K562 (cell line): ENCODE measurements at regions of chr1 and their contacts with region 1.

Region 1: DNA sequence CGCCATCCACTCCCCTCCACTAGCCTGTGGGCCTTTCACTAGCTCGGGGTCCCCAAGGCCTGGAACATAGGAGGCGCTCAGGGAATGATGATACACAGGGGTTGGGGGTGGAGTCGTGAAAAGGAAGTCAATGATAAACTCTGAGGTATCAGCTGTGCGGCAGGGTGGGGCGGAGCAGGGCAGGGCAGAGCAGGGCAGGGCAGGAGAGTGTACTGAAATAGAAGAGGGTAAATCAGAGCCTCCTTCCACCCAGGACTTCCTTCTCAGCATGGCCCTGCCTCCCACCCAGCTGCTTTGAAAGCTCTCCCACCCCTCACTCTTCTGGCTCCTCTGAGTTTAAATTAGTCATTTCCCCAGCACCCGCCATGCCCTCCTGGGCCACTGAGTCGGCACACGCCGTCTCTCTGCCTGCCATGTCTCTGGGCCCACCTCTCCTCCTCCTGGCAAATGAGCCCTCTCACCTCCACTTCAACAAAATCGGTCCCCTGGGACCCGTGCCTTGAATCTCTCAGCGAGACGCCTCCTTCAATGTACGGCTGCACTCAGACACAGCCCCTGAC is 16.9 kb downstream of the CAPZB start:
- DNase-seq: peak; percentile 70 to 87 (median 76)
- ATAC-seq: peak; percentile 90
- H3K4me3 ChIP-seq: no peak overlapping the region; the same call in 1 of the 2 replicates
- H3K27ac ChIP-seq: peak overlapping the region; percentile 75
- H3K4me1 ChIP-seq: peaks cover 17 to 45% of the 10 kb centered on the region in 2 experiments
- H3K27me3 ChIP-seq: no peaks in the 10 kb centered on the region
- CTCF ChIP-seq: peak in 2 of 3 experiments; percentile 41 to 49; a peak in 4 of 6 replicates
- EP300 ChIP-seq: peak; percentile 10; the same call in 1 of the 2 replicates
- POLR2A ChIP-seq: no peak
- RAD21 ChIP-seq: peak; percentile 42 to 58

Region 2: GRCh38 chr1:19240673-19241538 is 227.6 kb before region 1 on chr1:
- CTCF ChIA-PET with region 1: no interaction called
- POLR2A ChIA-PET with region 1: no interaction called
- in situ Hi-C with region 1: no loop called
- intact Hi-C with region 1: no loop called
- DNase-seq: peak; percentile 74 to 86 (median 76)
- ATAC-seq: peak; percentile 96
- H3K4me3 ChIP-seq: no peak overlapping the region
- H3K27ac ChIP-seq: no peak overlapping the region
- H3K4me1 ChIP-seq: no peaks in the 10 kb centered on the region; a peak in 1 of 5 replicates
- H3K27me3 ChIP-seq: no peaks in the 10 kb centered on the region
- CTCF ChIP-seq: peak; percentile 79 to 96 (median 90)
- EP300 ChIP-seq: no peak
- POLR2A ChIP-seq: no peak
- RAD21 ChIP-seq: peak; percentile 77 to 83

Region 3: GRCh38 chr1:19454265-19455146 is 14.0 kb before region 1 on chr1:
- CTCF ChIA-PET with region 1: no interaction called
- POLR2A ChIA-PET with region 1: interaction called, 22 read pairs
- in situ Hi-C with region 1: no loop called
- intact Hi-C with region 1: no loop called
- DNase-seq: no peak
- ATAC-seq: no peak
- H3K4me3 ChIP-seq: no peak overlapping the region
- H3K27ac ChIP-seq: no peak overlapping the region
- H3K4me1 ChIP-seq: peaks cover 0 to 10% of the 10 kb centered on the region in 2 experiments; a peak in 3 of 5 replicates
- H3K27me3 ChIP-seq: no peaks in the 10 kb centered on the region
- CTCF ChIP-seq: no peak
- EP300 ChIP-seq: no peak
- POLR2A ChIP-seq: no peak
- RAD21 ChIP-seq: no peak

Region 4: GRCh38 chr1:19643602-19644394 is 175.3 kb after region 1 on chr1 and contains the start of gene NBL1:
- CTCF ChIA-PET with region 1: no interaction called
- POLR2A ChIA-PET with region 1: interaction called, 4 read pairs
- in situ Hi-C with region 1: no loop called
- intact Hi-C with region 1: loop called (anchors 10 kb)
- DNase-seq: peak; percentile 69 to 93 (median 83)
- ATAC-seq: peak; percentile 62
- H3K4me3 ChIP-seq: peak within 1 kb of the TSS; percentile 34
- H3K27ac ChIP-seq: no peak within 1 kb of the TSS
- H3K4me1 ChIP-seq: peaks cover 0 to 36% of the 10 kb centered on the region in 2 experiments; a peak in 4 of 5 replicates
- H3K27me3 ChIP-seq: peaks cover 16 to 39% of the 10 kb centered on the region in 2 experiments; a peak in 4 of 5 replicates
- CTCF ChIP-seq: no peak
- EP300 ChIP-seq: no peak
- POLR2A ChIP-seq: no peak
- RAD21 ChIP-seq: no peak
- polyA plus RNA-seq, gene NBL1: 0.10 TPM in 1 of 2 experiments, not detected in the other

Region 5: GRCh38 chr1:20008391-20008841 is 539.9 kb after region 1 on chr1:
- CTCF ChIA-PET with region 1: no interaction called
- POLR2A ChIA-PET with region 1: no interaction called
- in situ Hi-C with region 1: no loop called
- intact Hi-C with region 1: no loop called
- DNase-seq: peak; percentile 39 to 77 (median 54)
- ATAC-seq: peak; percentile 89
- H3K4me3 ChIP-seq: no peak overlapping the region
- H3K27ac ChIP-seq: no peak overlapping the region
- H3K4me1 ChIP-seq: peaks cover 0 to 13% of the 10 kb centered on the region in 2 experiments; a peak in 4 of 5 replicates
- H3K27me3 ChIP-seq: no peaks in the 10 kb centered on the region
- CTCF ChIP-seq: no peak
- EP300 ChIP-seq: peak; percentile 78
- POLR2A ChIP-seq: no peak
- RAD21 ChIP-seq: no peak